Uterus (tissue), 4 donors: ENCODE measurements at regions of chr15 and their contacts with region 1.

Region 1: GRCh38 chr15:40274350-40275274 is 8.3 kb downstream of the ANKRD63 start:
- DNase-seq: peak; percentile 77 to 78
- H3K4me3 ChIP-seq: no peak overlapping the region
- H3K27ac ChIP-seq: no peak overlapping the region
- H3K4me1 ChIP-seq: no peaks in the 10 kb centered on the region
- H3K27me3 ChIP-seq: peaks cover under 1 to 1% of the 10 kb centered on the region in 2 donors
- CTCF ChIP-seq: peak; percentile 100
- POLR2A ChIP-seq: peak in 1 of 2 donors; percentile 16

Region 2: GRCh38 chr15:40054605-40055545 is 219.7 kb before region 1 on chr15:
- intact Hi-C with region 1: loop called (anchors 5 kb)
- DNase-seq: no peak
- H3K4me3 ChIP-seq: no peak overlapping the region
- H3K27ac ChIP-seq: no peak overlapping the region
- H3K4me1 ChIP-seq: no peaks in the 10 kb centered on the region
- H3K27me3 ChIP-seq: no peaks in the 10 kb centered on the region
- CTCF ChIP-seq: no peak
- POLR2A ChIP-seq: no peak

Region 3: GRCh38 chr15:40217159-40217824 is 57.3 kb before region 1 on chr15:
- intact Hi-C with region 1: loop called (anchors 5 kb)
- DNase-seq: peak in 1 of 2 donors; percentile 38
- H3K4me3 ChIP-seq: no peak overlapping the region
- H3K27ac ChIP-seq: no peak overlapping the region
- H3K4me1 ChIP-seq: no peaks in the 10 kb centered on the region
- H3K27me3 ChIP-seq: no peaks in the 10 kb centered on the region
- CTCF ChIP-seq: peak; percentile 80 to 86 (median 82)
- POLR2A ChIP-seq: no peak

Region 4: GRCh38 chr15:40421246-40422157 is 146.9 kb after region 1 on chr15:
- intact Hi-C with region 1: loop called (anchors 5 kb)
- DNase-seq: peak; percentile 61 to 75
- H3K4me3 ChIP-seq: no peak overlapping the region
- H3K27ac ChIP-seq: no peak overlapping the region
- H3K4me1 ChIP-seq: peaks cover 0 to 4% of the 10 kb centered on the region in 2 donors
- H3K27me3 ChIP-seq: no peaks in the 10 kb centered on the region
- CTCF ChIP-seq: peak; percentile 88 to 97 (median 94)
- POLR2A ChIP-seq: peak in 1 of 2 donors; percentile 22